CD4-positive, alpha-beta T cell (primary cell): ENCODE measurements at regions of chr11 and their contacts with region 1.

Region 1: DNA sequence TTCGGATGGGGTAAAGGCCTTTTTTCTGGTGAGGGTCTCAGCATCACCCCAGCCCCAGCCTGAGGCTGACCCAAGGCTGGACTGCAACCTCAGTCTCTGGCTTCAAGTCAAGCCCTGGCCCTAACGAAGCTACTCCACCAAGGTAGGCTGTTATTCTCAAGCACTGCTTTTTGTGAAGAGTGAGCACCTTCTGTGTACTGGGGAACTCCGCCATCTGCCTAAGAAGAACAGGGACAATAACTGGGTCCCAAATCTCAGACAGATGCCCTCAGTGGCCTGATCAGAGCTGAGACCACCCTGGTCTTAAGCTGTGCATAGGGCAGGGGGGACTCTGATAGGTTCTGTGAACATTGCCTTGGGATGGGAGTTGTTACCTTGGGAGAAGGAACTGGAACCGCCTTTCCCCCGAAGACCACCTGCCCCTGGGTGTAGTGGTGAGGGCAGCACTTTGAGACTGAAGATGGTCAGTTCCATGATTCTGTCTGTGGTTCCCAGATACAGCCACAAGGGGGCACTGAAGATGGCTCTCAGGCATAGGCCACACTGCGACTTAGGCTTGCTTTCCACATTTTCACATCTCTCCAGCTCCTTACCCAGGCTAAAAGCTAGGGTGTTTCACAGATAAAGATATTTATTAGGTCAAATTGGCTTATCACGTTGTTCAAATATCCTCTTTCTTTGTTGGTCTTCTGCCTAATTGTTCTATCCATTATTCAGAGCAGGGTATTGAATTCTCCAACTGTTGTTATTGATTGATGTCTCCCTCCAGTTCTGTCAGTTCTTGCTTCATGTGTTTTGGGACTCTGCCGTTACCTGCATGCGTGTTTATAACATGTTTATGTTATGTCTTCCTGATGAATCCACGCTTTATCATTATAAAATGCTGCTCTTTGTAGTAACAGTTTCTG is 11.8 kb upstream of the UVRAG start:
- DNase-seq: peak; percentile 53 to 84 (median 61)
- ATAC-seq: peak; percentile 94
- H3K4me3 ChIP-seq: no peak overlapping the region
- H3K4me3 Mint-ChIP-seq: no peak overlapping the region
- H3K27ac ChIP-seq: no peak overlapping the region
- H3K27ac Mint-ChIP-seq: no peak overlapping the region
- H3K4me1 ChIP-seq: peaks cover 26% of the 10 kb centered on the region
- H3K4me1 Mint-ChIP-seq: peaks cover 27% of the 10 kb centered on the region
- H3K27me3 ChIP-seq: no peaks in the 10 kb centered on the region
- H3K27me3 Mint-ChIP-seq: no peaks in the 10 kb centered on the region
- CTCF ChIP-seq: peak; percentile 96

Region 2: DNA sequence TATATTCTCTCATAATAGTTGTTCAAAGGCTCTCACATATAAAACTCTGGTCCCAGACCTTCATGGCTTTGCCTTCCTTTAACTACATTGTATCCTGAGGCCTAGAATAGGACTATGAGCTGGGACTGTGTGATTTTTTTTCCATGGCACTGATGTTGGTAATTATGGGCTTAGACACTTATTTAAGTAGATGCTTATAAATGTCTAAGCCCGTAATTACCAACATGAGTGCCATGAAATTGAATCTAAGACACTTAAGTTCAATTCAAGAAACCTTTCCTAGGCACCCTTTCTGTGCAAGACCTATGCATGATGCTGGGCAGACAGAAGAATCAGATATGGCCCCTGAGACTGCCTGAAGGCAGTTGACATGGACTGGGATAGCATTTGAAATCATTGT is 1554.7 kb before region 1 on chr11:
- CTCF ChIA-PET with region 1: no interaction called
- POLR2A ChIA-PET with region 1: no interaction called
- intact Hi-C with region 1: no loop called
- DNase-seq: no peak
- ATAC-seq: no peak
- H3K4me3 ChIP-seq: no peak overlapping the region
- H3K4me3 Mint-ChIP-seq: no peak overlapping the region
- H3K27ac ChIP-seq: no peak overlapping the region
- H3K27ac Mint-ChIP-seq: no peak overlapping the region
- H3K4me1 ChIP-seq: no peaks in the 10 kb centered on the region
- H3K4me1 Mint-ChIP-seq: no peaks in the 10 kb centered on the region
- H3K27me3 ChIP-seq: no peaks in the 10 kb centered on the region
- H3K27me3 Mint-ChIP-seq: no peaks in the 10 kb centered on the region
- CTCF ChIP-seq: no peak

Region 3: GRCh38 chr11:75547580-75548058 is 255.5 kb before region 1 on chr11:
- CTCF ChIA-PET with region 1: no interaction called
- POLR2A ChIA-PET with region 1: no interaction called
- intact Hi-C with region 1: no loop called
- DNase-seq: peak in 3 of 14 experiments; percentile 46 to 59 (median 54)
- ATAC-seq: no peak
- H3K4me3 ChIP-seq: no peak overlapping the region
- H3K4me3 Mint-ChIP-seq: no peak overlapping the region
- H3K27ac ChIP-seq: no peak overlapping the region
- H3K27ac Mint-ChIP-seq: no peak overlapping the region
- H3K4me1 ChIP-seq: no peaks in the 10 kb centered on the region
- H3K4me1 Mint-ChIP-seq: no peaks in the 10 kb centered on the region
- H3K27me3 ChIP-seq: peaks cover 0 to 7% of the 10 kb centered on the region in 2 experiments
- H3K27me3 Mint-ChIP-seq: peaks cover 5% of the 10 kb centered on the region
- CTCF ChIP-seq: peak; percentile 76

Region 4: DNA sequence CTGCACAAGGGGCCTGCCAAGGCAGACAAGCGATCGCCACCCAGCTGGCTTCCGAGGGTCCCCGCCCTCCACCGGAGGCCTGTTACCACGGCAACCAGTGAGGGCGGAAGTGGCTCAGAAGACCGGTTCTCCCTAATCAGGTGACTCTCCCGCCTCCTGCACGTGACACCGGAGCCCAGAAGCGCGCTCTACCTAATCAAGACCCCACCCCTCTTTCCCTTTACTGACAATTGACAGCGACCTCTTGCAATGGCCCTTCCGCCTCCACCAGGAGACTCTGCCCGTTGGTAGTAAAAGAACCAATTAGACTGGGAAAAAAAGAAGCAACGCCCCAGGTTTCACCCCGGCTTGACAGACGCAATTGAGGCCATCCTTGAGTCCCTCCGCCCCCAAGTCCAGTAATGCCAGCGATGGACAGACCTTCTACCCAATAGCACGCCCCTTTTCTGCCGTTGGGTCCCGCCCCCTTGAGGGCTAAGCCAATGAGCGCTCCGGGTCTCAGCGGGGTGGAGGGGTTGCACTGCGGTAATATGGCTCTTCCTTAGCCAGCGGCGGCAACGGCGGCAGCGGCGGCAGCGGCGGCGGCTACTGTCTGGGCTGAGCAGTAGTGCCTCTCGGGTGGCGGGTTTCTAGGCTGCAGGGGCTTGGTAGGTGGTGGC is 11.6 kb after region 1 on chr11 and contains the start of gene UVRAG:
- CTCF ChIA-PET with region 1: interaction called, 19 read pairs
- POLR2A ChIA-PET with region 1: interaction called, 8 read pairs
- intact Hi-C with region 1: no loop called
- DNase-seq: peak; percentile 96 to 99 (median 97)
- ATAC-seq: peak; percentile 86
- H3K4me3 ChIP-seq: peak within 1 kb of the TSS; percentile 88
- H3K4me3 Mint-ChIP-seq: peak within 1 kb of the TSS; percentile 95
- H3K27ac ChIP-seq: peak within 1 kb of the TSS; percentile 78 to 83
- H3K27ac Mint-ChIP-seq: peak within 1 kb of the TSS; percentile 92
- H3K4me1 ChIP-seq: peaks cover 30% of the 10 kb centered on the region
- H3K4me1 Mint-ChIP-seq: peaks cover 29% of the 10 kb centered on the region
- H3K27me3 ChIP-seq: no peaks in the 10 kb centered on the region
- H3K27me3 Mint-ChIP-seq: no peaks in the 10 kb centered on the region
- CTCF ChIP-seq: no peak
- total RNA-seq, gene UVRAG: 16.5 to 19.5 TPM

Region 5: GRCh38 chr11:75867775-75868374 is 64.7 kb after region 1 on chr11:
- CTCF ChIA-PET with region 1: interaction called, 70 read pairs
- POLR2A ChIA-PET with region 1: no interaction called
- intact Hi-C with region 1: loop called (anchors 1 kb)
- DNase-seq: peak in 11 of 14 experiments; percentile 1 to 80 (median 31)
- ATAC-seq: peak; percentile 59
- H3K4me3 ChIP-seq: no peak overlapping the region
- H3K4me3 Mint-ChIP-seq: no peak overlapping the region
- H3K27ac ChIP-seq: no peak overlapping the region
- H3K27ac Mint-ChIP-seq: no peak overlapping the region
- H3K4me1 ChIP-seq: peaks cover 3% of the 10 kb centered on the region
- H3K4me1 Mint-ChIP-seq: peaks cover 7% of the 10 kb centered on the region
- H3K27me3 ChIP-seq: no peaks in the 10 kb centered on the region
- H3K27me3 Mint-ChIP-seq: no peaks in the 10 kb centered on the region
- CTCF ChIP-seq: peak; percentile 89

Region 6: DNA sequence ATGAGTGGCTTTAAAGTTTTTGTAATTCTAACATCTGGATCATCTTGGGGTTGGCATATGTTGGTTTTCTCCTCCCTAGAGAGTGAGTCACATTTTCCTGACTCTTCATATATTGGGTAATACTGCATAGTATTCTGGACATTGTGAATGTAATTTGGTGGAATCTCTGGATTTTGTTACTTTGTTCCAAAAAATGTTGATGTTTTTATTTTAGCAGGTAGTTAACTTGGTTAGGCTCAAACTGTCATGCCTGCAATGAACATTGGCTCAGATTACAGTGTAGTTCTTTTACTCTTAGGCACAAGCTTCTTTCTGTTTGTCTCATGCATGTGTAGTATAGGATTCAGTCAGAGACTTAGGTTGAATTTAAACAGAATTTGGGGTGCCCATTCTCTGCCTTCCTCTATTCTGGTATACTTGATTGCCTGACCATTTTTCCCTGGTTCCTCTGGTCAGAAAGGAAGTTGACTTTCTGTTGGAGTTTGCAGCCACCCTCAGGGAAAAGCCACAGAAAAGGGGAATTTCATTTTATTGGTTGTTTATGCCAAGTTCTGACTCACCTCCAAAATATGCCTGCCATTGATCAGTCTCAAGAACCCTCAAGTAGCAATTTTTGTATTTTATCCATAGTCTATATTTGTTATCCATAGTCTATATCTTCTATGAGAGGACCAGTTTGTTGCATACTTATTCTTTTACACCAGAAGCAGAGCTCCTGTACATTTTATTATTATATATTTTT is 163.6 kb after region 1 on chr11:
- CTCF ChIA-PET with region 1: no interaction called
- POLR2A ChIA-PET with region 1: no interaction called
- intact Hi-C with region 1: no loop called
- DNase-seq: peak in 2 of 14 experiments; percentile 8 to 9
- ATAC-seq: no peak
- H3K4me3 ChIP-seq: no peak overlapping the region
- H3K4me3 Mint-ChIP-seq: no peak overlapping the region
- H3K27ac ChIP-seq: no peak overlapping the region
- H3K27ac Mint-ChIP-seq: no peak overlapping the region
- H3K4me1 ChIP-seq: no peaks in the 10 kb centered on the region
- H3K4me1 Mint-ChIP-seq: peaks cover 22% of the 10 kb centered on the region
- H3K27me3 ChIP-seq: no peaks in the 10 kb centered on the region
- H3K27me3 Mint-ChIP-seq: no peaks in the 10 kb centered on the region
- CTCF ChIP-seq: no peak

Region 7: GRCh38 chr11:76152086-76152681 is 349.0 kb after region 1 on chr11:
- CTCF ChIA-PET with region 1: no interaction called
- POLR2A ChIA-PET with region 1: no interaction called
- intact Hi-C with region 1: loop called in 1 of 2 experiments (anchors 2 kb)
- DNase-seq: peak; percentile 64 to 87 (median 76)
- ATAC-seq: peak; percentile 91
- H3K4me3 ChIP-seq: peak overlapping the region; percentile 44
- H3K4me3 Mint-ChIP-seq: peak overlapping the region; percentile 44
- H3K27ac ChIP-seq: no peak overlapping the region
- H3K27ac Mint-ChIP-seq: no peak overlapping the region
- H3K4me1 ChIP-seq: peaks cover 21% of the 10 kb centered on the region
- H3K4me1 Mint-ChIP-seq: peaks cover 23% of the 10 kb centered on the region
- H3K27me3 ChIP-seq: no peaks in the 10 kb centered on the region
- H3K27me3 Mint-ChIP-seq: no peaks in the 10 kb centered on the region
- CTCF ChIP-seq: peak; percentile 91

Region 8: GRCh38 chr11:76318744-76319384 is 515.7 kb after region 1 on chr11:
- CTCF ChIA-PET with region 1: no interaction called
- POLR2A ChIA-PET with region 1: no interaction called
- intact Hi-C with region 1: loop called (anchors 2 to 5 kb)
- DNase-seq: peak; percentile 78 to 94 (median 84)
- ATAC-seq: peak; percentile 97
- H3K4me3 ChIP-seq: no peak overlapping the region
- H3K4me3 Mint-ChIP-seq: no peak overlapping the region
- H3K27ac ChIP-seq: no peak overlapping the region
- H3K27ac Mint-ChIP-seq: no peak overlapping the region
- H3K4me1 ChIP-seq: peaks cover 7% of the 10 kb centered on the region
- H3K4me1 Mint-ChIP-seq: no peaks in the 10 kb centered on the region
- H3K27me3 ChIP-seq: peaks cover 21% of the 10 kb centered on the region in 2 experiments
- H3K27me3 Mint-ChIP-seq: peaks cover 42% of the 10 kb centered on the region
- CTCF ChIP-seq: peak; percentile 84